Activated CD4-positive, alpha-beta memory T cell treated with anti-CD3 and anti-CD28 coated beads, Interleukin-2, amount 10 ng/mL, durations not matched to agents 7 days and 5 days (primary cell): ENCODE measurements at regions of chr1 and their contacts with region 1.

Region 1: GRCh38 chr1:150235852-150236613 is at the start of gene ANP32E:
- DNase-seq: peak; percentile 96
- H3K4me3 Mint-ChIP-seq: no peak within 1 kb of the TSS
- H3K27ac Mint-ChIP-seq: no peak within 1 kb of the TSS
- H3K4me1 Mint-ChIP-seq: peaks cover 22% of the 10 kb centered on the region
- H3K27me3 Mint-ChIP-seq: no peaks in the 10 kb centered on the region
- total RNA-seq, gene ANP32E: 185 TPM

Region 2: GRCh38 chr1:150213170-150214098 is 22.6 kb before region 1 on chr1:
- CTCF ChIA-PET with region 1: interaction called, 5 read pairs
- POLR2A ChIA-PET with region 1: interaction called, 31 read pairs
- DNase-seq: peak; percentile 95
- H3K4me3 Mint-ChIP-seq: peak overlapping the region; percentile 78
- H3K27ac Mint-ChIP-seq: peak overlapping the region; percentile 93
- H3K4me1 Mint-ChIP-seq: peaks cover 21% of the 10 kb centered on the region
- H3K27me3 Mint-ChIP-seq: no peaks in the 10 kb centered on the region

Region 3: GRCh38 chr1:150221552-150221951 is 14.5 kb before region 1 on chr1:
- CTCF ChIA-PET with region 1: interaction called, 8 read pairs
- POLR2A ChIA-PET with region 1: interaction called, 31 read pairs
- DNase-seq: no peak
- H3K4me3 Mint-ChIP-seq: no peak overlapping the region
- H3K27ac Mint-ChIP-seq: no peak overlapping the region
- H3K4me1 Mint-ChIP-seq: peaks cover 18% of the 10 kb centered on the region
- H3K27me3 Mint-ChIP-seq: no peaks in the 10 kb centered on the region

Region 4: GRCh38 chr1:150268705-150269403 is 32.8 kb after region 1 on chr1 and contains the start of gene APH1A:
- CTCF ChIA-PET with region 1: no interaction called
- POLR2A ChIA-PET with region 1: interaction called, 27 read pairs
- DNase-seq: peak; percentile 95
- H3K4me3 Mint-ChIP-seq: peak within 1 kb of the TSS; percentile 91
- H3K27ac Mint-ChIP-seq: peak within 1 kb of the TSS; percentile 94
- H3K4me1 Mint-ChIP-seq: peaks cover 38% of the 10 kb centered on the region
- H3K27me3 Mint-ChIP-seq: no peaks in the 10 kb centered on the region
- total RNA-seq, gene APH1A: 142 to 144 TPM

Region 5: GRCh38 chr1:150567717-150568593 is 331.9 kb after region 1 on chr1:
- CTCF ChIA-PET with region 1: no interaction called
- POLR2A ChIA-PET with region 1: interaction called, 11 read pairs
- DNase-seq: peak; percentile 69
- H3K4me3 Mint-ChIP-seq: peak overlapping the region; percentile 78
- H3K27ac Mint-ChIP-seq: peak overlapping the region; percentile 99
- H3K4me1 Mint-ChIP-seq: peaks cover 93% of the 10 kb centered on the region
- H3K27me3 Mint-ChIP-seq: no peaks in the 10 kb centered on the region